ENCODE measurements at regions of chr1 and their contacts with region 1.

Region 1: GRCh38 chr1:182781841-182782586 is 7.6 kb upstream of the NPL start:
- DNase-seq: peak; percentile 80
- ATAC-seq: peak; percentile 83
- H3K4me3 ChIP-seq: no peak overlapping the region
- H3K4me3 Mint-ChIP-seq: no peak overlapping the region
- H3K27ac ChIP-seq: no peak overlapping the region
- H3K27ac Mint-ChIP-seq: no peak overlapping the region
- H3K4me1 ChIP-seq: no peaks in the 10 kb centered on the region
- H3K4me1 Mint-ChIP-seq: peaks cover 5% of the 10 kb centered on the region
- H3K27me3 ChIP-seq: no peaks in the 10 kb centered on the region
- H3K27me3 Mint-ChIP-seq: no peaks in the 10 kb centered on the region
- CTCF ChIP-seq: peak; percentile 81

Region 2: DNA sequence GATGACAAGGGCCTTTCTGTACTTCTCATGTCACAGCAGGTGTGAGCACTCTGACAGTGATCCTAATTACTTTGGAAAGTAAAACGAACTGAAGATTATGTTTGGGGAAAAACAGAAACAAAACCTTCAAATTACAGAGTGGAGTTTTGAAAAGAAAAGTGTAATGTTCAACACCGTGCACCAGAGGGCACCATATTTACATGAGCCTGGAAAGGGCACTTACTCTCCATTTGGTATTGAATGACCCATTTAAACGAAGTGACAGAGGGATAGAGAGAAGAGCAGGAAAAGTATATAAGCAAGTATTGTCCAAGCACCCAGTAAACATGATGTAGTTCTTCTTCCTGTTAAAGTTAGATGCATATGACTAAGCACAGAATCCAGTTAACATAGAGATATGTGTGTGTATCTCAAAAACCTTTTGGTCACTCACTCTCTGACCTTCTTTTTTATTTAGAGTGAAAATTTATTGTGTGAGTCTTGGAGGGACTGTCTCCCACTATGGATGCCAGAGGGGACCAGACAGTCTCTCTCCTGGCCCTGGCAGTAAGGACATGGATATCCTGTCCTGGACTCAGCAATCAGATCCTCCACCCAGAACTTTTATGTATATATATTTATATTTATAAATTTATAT is 335.9 kb before region 1 on chr1:
- CTCF ChIA-PET with region 1: interaction called, 43 read pairs
- POLR2A ChIA-PET with region 1: no interaction called
- intact Hi-C with region 1: no loop called
- DNase-seq: peak; percentile 68
- ATAC-seq: peak; percentile 63
- H3K4me3 ChIP-seq: no peak overlapping the region
- H3K4me3 Mint-ChIP-seq: no peak overlapping the region
- H3K27ac ChIP-seq: no peak overlapping the region
- H3K27ac Mint-ChIP-seq: no peak overlapping the region
- H3K4me1 ChIP-seq: peaks cover 0 to 3% of the 10 kb centered on the region in 2 donors
- H3K4me1 Mint-ChIP-seq: peaks cover 2% of the 10 kb centered on the region
- H3K27me3 ChIP-seq: peaks cover 0 to 3% (median 0%) of the 10 kb centered on the region in 4 experiments
- H3K27me3 Mint-ChIP-seq: no peaks in the 10 kb centered on the region
- CTCF ChIP-seq: peak; percentile 92

Region 3: DNA sequence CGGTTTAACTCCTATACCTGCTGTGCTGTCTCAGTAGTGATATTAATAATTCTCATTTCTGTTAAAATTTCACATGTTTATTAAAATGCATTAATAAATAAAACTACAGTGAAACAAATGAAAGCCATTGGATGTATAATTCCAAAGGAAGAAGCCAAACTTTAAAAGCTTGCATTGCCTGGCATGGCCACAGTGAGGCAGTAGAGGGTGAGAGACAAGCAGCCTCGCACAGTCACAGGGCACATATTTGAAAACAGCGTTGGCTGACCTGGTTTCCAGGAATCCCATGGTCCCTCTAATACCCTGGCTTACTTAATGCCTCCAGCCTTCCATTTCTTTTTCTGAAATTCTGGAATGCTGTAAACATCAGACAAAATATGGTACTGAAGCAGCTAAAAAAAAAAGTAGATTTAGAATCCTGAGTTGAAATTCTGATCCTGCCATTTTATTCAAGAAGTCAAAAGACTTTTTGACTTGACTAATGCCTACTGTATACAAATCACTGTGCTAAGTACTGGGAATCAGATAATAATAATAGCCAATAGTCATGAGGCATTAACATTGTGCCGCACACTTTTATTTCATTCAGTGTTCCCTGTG is 186.3 kb before region 1 on chr1:
- CTCF ChIA-PET with region 1: interaction called, 989 read pairs
- POLR2A ChIA-PET with region 1: interaction called, 6 read pairs
- intact Hi-C with region 1: loop called (anchors 1 kb)
- DNase-seq: peak; percentile 67
- ATAC-seq: peak; percentile 86
- H3K4me3 ChIP-seq: no peak overlapping the region
- H3K4me3 Mint-ChIP-seq: no peak overlapping the region
- H3K27ac ChIP-seq: no peak overlapping the region
- H3K27ac Mint-ChIP-seq: no peak overlapping the region
- H3K4me1 ChIP-seq: peaks cover 0 to 3% of the 10 kb centered on the region in 2 donors
- H3K4me1 Mint-ChIP-seq: peaks cover 4% of the 10 kb centered on the region
- H3K27me3 ChIP-seq: no peaks in the 10 kb centered on the region
- H3K27me3 Mint-ChIP-seq: no peaks in the 10 kb centered on the region
- CTCF ChIP-seq: peak; percentile 92

Region 4: DNA sequence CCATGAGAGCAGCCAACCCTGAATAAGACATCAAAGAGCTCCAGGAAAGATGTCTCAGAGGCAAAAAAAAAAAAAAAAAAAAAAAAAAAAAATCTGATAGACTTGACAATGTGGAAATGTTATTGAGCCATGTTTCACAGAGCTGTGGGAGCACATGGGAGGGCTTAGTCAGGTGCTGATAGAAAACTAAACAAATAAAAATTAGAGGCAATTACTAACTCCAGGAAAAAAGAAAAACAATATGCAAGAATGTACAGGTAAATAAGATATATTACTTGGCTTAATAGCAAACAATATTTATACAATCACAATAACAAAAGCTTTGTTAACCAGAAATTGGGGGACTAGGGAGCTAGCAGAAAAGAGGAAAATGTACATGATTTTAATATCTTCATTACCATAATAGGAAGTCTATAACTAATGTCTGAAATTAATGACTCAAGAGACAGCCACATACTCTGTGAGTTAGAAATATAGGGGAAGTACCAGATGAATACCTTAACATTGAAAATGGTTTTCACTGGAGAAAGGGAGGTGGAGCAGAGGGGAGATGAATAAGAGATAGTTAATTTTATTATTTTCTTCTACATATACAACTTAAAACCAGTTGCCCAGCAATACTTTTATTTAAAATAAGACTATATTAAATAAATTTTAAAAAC is 161.0 kb before region 1 on chr1:
- CTCF ChIA-PET with region 1: interaction called, 19 read pairs
- POLR2A ChIA-PET with region 1: no interaction called
- intact Hi-C with region 1: loop called (anchors 5 kb)
- DNase-seq: no peak
- ATAC-seq: no peak
- H3K4me3 ChIP-seq: no peak overlapping the region
- H3K4me3 Mint-ChIP-seq: no peak overlapping the region
- H3K27ac ChIP-seq: no peak overlapping the region
- H3K27ac Mint-ChIP-seq: no peak overlapping the region
- H3K4me1 ChIP-seq: peaks cover 32 to 38% of the 10 kb centered on the region in 2 donors
- H3K4me1 Mint-ChIP-seq: peaks cover 49% of the 10 kb centered on the region
- H3K27me3 ChIP-seq: no peaks in the 10 kb centered on the region
- H3K27me3 Mint-ChIP-seq: no peaks in the 10 kb centered on the region
- CTCF ChIP-seq: no peak

Region 5: DNA sequence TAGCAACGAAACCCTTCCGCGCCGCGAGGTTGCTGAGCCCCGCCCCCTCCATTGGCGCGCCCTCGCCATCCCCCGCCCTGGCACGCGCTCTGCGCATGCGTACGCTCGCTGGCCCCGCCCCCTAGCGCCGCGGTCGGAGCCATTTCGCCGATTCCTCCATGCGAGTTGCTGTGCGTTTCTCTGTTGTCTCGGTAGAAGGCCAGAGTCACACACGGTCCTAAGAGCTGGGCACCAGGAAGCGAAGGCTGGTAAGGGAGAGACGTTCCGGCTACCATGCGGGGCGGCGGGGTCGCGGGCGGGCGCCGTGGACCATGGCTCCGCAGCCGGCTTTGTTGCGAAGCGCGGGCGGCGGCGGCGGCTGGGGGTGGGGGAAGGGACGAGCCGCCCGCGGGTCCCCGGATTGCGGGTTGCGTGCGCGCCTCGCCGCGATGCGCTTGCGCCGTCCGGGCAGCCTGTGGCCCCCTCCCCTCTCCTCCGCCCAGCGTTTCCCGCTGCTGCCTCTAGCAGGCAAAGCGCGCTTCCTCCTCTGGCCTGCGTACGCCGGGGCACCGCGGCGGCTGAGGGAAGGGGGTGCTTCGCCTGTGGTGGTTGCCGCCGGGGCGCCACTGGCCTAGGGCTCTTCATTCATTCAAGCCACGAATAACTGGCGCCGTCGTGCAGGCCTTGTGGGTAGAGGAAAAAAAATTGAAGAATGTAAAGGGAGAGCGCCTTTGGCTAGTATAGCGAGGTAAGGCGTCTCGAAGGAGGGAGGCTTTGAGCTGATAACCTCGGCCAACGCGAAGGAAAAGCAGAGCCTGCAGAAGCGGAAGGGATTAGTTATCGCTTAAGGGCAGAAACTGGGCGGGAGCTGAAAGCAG is 57.4 kb after region 1 on chr1 and contains the start of gene DHX9:
- CTCF ChIA-PET with region 1: interaction called, 10 read pairs
- POLR2A ChIA-PET with region 1: no interaction called
- intact Hi-C with region 1: no loop called
- DNase-seq: peak; percentile 97
- ATAC-seq: peak; percentile 80
- H3K4me3 ChIP-seq: peak within 1 kb of the TSS; percentile 85 to 92 (median 92)
- H3K4me3 Mint-ChIP-seq: peak within 1 kb of the TSS; percentile 92
- H3K27ac ChIP-seq: peak within 1 kb of the TSS; percentile 81 to 85
- H3K27ac Mint-ChIP-seq: peak within 1 kb of the TSS; percentile 97
- H3K4me1 ChIP-seq: peaks cover 22 to 28% of the 10 kb centered on the region in 2 donors
- H3K4me1 Mint-ChIP-seq: peaks cover 35% of the 10 kb centered on the region
- H3K27me3 ChIP-seq: no peaks in the 10 kb centered on the region
- H3K27me3 Mint-ChIP-seq: no peaks in the 10 kb centered on the region
- CTCF ChIP-seq: peak; percentile 43
- total RNA-seq, gene DHX9: 207 and 213 TPM in 2 replicates

Region 6: GRCh38 chr1:182861994-182862393 is 80.0 kb after region 1 on chr1:
- CTCF ChIA-PET with region 1: no interaction called
- POLR2A ChIA-PET with region 1: no interaction called
- intact Hi-C with region 1: no loop called
- DNase-seq: no peak
- ATAC-seq: no peak
- H3K4me3 ChIP-seq: no peak overlapping the region
- H3K4me3 Mint-ChIP-seq: no peak overlapping the region
- H3K27ac ChIP-seq: no peak overlapping the region
- H3K27ac Mint-ChIP-seq: no peak overlapping the region
- H3K4me1 ChIP-seq: no peaks in the 10 kb centered on the region
- H3K4me1 Mint-ChIP-seq: no peaks in the 10 kb centered on the region
- H3K27me3 ChIP-seq: no peaks in the 10 kb centered on the region
- H3K27me3 Mint-ChIP-seq: no peaks in the 10 kb centered on the region
- CTCF ChIP-seq: no peak

Region 7: DNA sequence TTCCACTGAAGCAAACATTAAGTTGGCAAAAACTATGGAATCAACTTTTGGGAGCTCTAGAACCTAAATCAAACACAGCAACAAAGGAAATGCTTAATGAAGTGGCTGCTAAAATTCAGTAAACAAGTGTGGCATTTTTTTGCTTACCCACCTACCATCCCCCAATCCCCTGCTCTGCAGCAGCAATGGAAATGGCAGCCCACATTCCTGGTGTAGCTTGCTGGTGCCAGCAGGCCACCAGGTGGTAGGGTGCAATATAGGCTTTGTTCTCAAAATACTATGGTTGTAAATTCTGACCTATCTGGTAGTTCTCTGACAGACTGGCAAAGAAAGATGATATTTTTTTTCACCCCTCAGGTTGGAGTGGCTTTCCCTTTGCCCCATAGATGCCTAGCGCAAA is 128.1 kb after region 1 on chr1:
- CTCF ChIA-PET with region 1: no interaction called
- POLR2A ChIA-PET with region 1: no interaction called
- intact Hi-C with region 1: no loop called
- DNase-seq: no peak
- ATAC-seq: no peak
- H3K4me3 ChIP-seq: no peak overlapping the region
- H3K4me3 Mint-ChIP-seq: no peak overlapping the region
- H3K27ac ChIP-seq: no peak overlapping the region
- H3K27ac Mint-ChIP-seq: no peak overlapping the region
- H3K4me1 ChIP-seq: no peaks in the 10 kb centered on the region
- H3K4me1 Mint-ChIP-seq: no peaks in the 10 kb centered on the region
- H3K27me3 ChIP-seq: peaks cover 0 to 6% (median 2%) of the 10 kb centered on the region in 4 experiments
- H3K27me3 Mint-ChIP-seq: peaks cover 14% of the 10 kb centered on the region
- CTCF ChIP-seq: no peak

Region 8: DNA sequence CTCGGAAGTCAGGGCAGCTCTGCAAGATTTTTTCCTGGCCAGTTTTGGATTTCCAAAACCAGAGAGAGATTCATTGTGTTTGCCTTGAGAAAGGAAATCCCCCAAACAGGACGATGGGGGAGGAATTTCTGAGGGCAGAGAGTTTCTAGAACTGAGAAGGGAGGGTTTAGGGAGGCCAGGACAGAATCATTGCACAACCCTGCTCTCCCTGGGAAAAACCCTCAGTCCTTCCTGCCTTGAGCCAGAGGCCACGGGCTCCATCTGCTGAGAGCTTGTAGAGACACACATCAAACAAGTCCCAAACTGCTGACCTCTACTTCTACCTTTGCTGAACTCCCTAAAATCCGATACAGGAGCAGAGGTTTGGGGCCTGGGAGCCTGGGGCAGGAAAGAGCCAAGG is 536.4 kb after region 1 on chr1:
- CTCF ChIA-PET with region 1: no interaction called
- POLR2A ChIA-PET with region 1: no interaction called
- intact Hi-C with region 1: no loop called
- DNase-seq: no peak
- ATAC-seq: no peak
- H3K4me3 ChIP-seq: no peak overlapping the region
- H3K4me3 Mint-ChIP-seq: no peak overlapping the region
- H3K27ac ChIP-seq: no peak overlapping the region
- H3K27ac Mint-ChIP-seq: no peak overlapping the region
- H3K4me1 ChIP-seq: no peaks in the 10 kb centered on the region
- H3K4me1 Mint-ChIP-seq: no peaks in the 10 kb centered on the region
- H3K27me3 ChIP-seq: peaks cover 0 to 2% (median 0%) of the 10 kb centered on the region in 4 experiments
- H3K27me3 Mint-ChIP-seq: peaks cover 23% of the 10 kb centered on the region
- CTCF ChIP-seq: no peak

Region 9: GRCh38 chr1:183804881-183805841 is 1023.1 kb after region 1 on chr1 and contains the start of gene RGL1:
- CTCF ChIA-PET with region 1: no interaction called
- POLR2A ChIA-PET with region 1: no interaction called
- intact Hi-C with region 1: no loop called
- DNase-seq: peak; percentile 3
- ATAC-seq: no peak
- H3K4me3 ChIP-seq: peak within 1 kb of the TSS; percentile 4 to 55 (median 29)
- H3K4me3 Mint-ChIP-seq: peak within 1 kb of the TSS; percentile 62
- H3K27ac ChIP-seq: no peak within 1 kb of the TSS
- H3K27ac Mint-ChIP-seq: no peak within 1 kb of the TSS
- H3K4me1 ChIP-seq: peaks cover 6 to 10% of the 10 kb centered on the region in 2 donors
- H3K4me1 Mint-ChIP-seq: peaks cover 6% of the 10 kb centered on the region
- H3K27me3 ChIP-seq: peaks cover 0 to 24% (median 5%) of the 10 kb centered on the region in 4 experiments
- H3K27me3 Mint-ChIP-seq: peaks cover 41% of the 10 kb centered on the region
- CTCF ChIP-seq: no peak
- total RNA-seq, gene RGL1: 0.83 and 1.1 TPM in 2 replicates

Measured in B cell (primary cell).